Activated naive CD8-positive, alpha-beta T cell treated with anti-CD3 and anti-CD28 coated beads, Interleukin-2, amount 10 ng/mL, durations not matched to agents 7 days and 5 days (primary cell): ENCODE measurements at regions of chr12 and their contacts with region 1.

Region 1: GRCh38 chr12:51391283-51392162 is at the start of gene GALNT6:
- DNase-seq: peak; percentile 84
- ATAC-seq: peak; percentile 67
- H3K4me3 Mint-ChIP-seq: peak within 1 kb of the TSS; percentile 97
- H3K27ac Mint-ChIP-seq: peak within 1 kb of the TSS; percentile 93
- H3K4me1 Mint-ChIP-seq: peaks cover 68% of the 10 kb centered on the region
- H3K27me3 Mint-ChIP-seq: no peaks in the 10 kb centered on the region
- total RNA-seq, gene GALNT6: 30.0 to 31.0 TPM

Region 2: GRCh38 chr12:51368640-51369517 is 22.6 kb before region 1 on chr12:
- POLR2A ChIA-PET with region 1: interaction called, 35 read pairs
- DNase-seq: peak; percentile 82
- ATAC-seq: peak; percentile 99
- H3K4me3 Mint-ChIP-seq: peak overlapping the region; percentile 74
- H3K27ac Mint-ChIP-seq: peak overlapping the region; percentile 83
- H3K4me1 Mint-ChIP-seq: peaks cover 35% of the 10 kb centered on the region
- H3K27me3 Mint-ChIP-seq: no peaks in the 10 kb centered on the region

Region 3: GRCh38 chr12:51405801-51406207 is 14.3 kb after region 1 on chr12:
- POLR2A ChIA-PET with region 1: no interaction called
- DNase-seq: no peak
- ATAC-seq: no peak
- H3K4me3 Mint-ChIP-seq: no peak overlapping the region
- H3K27ac Mint-ChIP-seq: no peak overlapping the region
- H3K4me1 Mint-ChIP-seq: peaks cover 10% of the 10 kb centered on the region
- H3K27me3 Mint-ChIP-seq: no peaks in the 10 kb centered on the region

Region 4: DNA sequence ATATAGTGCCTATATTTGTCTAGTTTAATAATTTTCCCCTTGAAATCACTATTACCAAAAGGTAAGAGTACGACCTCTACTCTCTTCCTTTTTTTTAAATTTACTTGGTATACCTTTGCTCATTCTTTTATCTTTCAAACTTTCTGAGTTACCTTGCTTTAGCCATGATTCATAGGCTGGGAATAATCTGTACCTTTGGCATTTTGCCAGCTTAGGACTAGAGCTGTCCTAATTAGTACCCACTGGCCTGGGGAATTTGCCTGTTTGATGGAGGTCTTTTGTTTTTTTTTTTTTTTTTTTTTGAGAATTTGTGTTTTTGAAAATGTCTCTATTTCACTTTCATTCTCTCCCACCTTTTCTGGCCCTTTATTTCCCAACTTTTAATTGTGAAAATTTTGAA is 24.4 kb after region 1 on chr12:
- POLR2A ChIA-PET with region 1: no interaction called
- DNase-seq: no peak
- ATAC-seq: no peak
- H3K4me3 Mint-ChIP-seq: no peak overlapping the region
- H3K27ac Mint-ChIP-seq: no peak overlapping the region
- H3K4me1 Mint-ChIP-seq: peaks cover 14% of the 10 kb centered on the region
- H3K27me3 Mint-ChIP-seq: no peaks in the 10 kb centered on the region

Region 5: DNA sequence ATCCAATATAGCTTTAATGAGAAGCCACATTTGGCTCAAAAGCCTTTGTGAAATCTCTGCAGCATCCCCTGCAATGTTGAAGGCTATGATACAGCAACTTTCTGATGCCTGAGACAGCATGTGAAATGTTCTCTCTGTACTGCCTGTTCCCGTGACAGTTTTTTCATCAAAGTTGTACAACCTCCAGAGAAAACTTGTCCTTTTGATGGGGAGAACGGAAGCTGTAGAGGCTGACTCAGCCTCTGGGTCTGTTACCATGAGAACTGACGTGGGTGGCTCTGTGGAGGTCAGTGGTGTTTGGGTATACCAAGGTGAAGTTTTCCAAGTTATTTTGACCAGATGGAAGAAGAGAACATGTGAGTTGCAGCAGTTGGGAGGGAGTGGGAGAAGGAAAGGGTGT is 50.1 kb after region 1 on chr12:
- POLR2A ChIA-PET with region 1: no interaction called
- DNase-seq: no peak
- ATAC-seq: peak; percentile 73
- H3K4me3 Mint-ChIP-seq: no peak overlapping the region
- H3K27ac Mint-ChIP-seq: no peak overlapping the region
- H3K4me1 Mint-ChIP-seq: peaks cover 33% of the 10 kb centered on the region
- H3K27me3 Mint-ChIP-seq: peaks cover 3% of the 10 kb centered on the region

Region 6: DNA sequence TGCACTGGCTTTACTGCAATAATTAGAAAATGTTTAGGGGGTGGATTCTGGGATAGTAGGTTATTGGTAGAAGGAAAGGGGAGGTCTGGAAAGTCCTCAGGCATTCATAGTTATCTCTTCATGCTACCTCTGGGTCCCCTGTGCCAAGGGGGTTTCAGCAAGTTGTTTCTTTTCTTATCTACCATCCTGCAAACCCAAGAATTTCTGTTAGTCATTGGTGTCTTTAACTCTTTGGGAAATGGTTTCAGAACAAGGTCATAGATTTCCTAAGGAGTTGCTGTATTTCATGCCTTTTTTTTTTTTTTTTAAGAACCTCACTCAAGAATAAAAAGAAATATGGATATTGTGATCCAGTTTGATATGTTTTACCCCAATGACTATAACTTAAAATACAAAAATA is 96.8 kb after region 1 on chr12:
- POLR2A ChIA-PET with region 1: no interaction called
- DNase-seq: no peak
- ATAC-seq: no peak
- H3K4me3 Mint-ChIP-seq: no peak overlapping the region
- H3K27ac Mint-ChIP-seq: no peak overlapping the region
- H3K4me1 Mint-ChIP-seq: peaks cover 12% of the 10 kb centered on the region
- H3K27me3 Mint-ChIP-seq: no peaks in the 10 kb centered on the region